Naive thymus-derived CD4-positive, alpha-beta T cell (primary cell): ENCODE measurements at regions of chr19 and their contacts with region 1.

Region 1: DNA sequence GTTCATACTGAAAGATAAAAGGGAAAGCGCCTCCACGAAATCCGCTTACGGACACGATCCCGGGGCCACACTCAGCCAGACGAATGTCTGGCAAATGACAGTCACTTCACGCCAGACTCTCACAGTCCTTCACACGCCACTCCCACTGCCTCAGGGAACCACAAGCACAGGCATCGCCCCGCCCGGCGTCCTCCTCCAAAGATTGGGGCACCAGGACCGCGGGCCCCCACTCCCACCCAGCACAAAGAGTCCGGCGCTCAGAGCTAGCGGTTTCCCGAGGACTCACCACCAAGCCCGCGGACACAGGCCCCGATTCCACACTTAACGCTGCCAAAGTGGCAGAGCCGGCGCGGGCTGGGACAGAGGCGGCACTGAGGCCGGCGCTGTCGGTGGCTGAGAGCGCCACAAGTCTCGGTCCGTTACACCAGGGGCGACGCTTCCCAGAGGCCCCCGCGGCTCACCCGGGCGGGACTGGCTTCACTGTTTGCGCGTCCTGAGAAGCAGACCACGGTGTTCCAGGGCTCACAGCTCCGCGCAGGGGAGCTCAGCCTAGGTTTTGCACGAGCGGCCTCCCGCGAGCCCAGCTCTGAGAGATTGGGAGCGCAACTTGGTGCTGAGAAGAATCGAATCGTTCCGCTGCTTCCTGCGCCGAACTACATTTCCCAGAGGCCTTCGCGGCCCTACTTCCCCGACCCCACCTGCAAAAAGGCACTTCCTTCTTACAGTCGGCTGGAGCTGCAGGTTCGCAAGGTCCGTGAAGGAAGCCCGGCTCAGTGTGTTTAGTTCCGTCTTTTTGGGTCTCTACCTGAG is at the start of gene ZNF569:
- DNase-seq: peak; percentile 68 to 95 (median 92)
- ATAC-seq: peak; percentile 79
- H3K4me3 ChIP-seq: peak within 1 kb of the TSS; percentile 79
- H3K4me3 Mint-ChIP-seq: peak within 1 kb of the TSS; percentile 91 to 100 (median 95)
- H3K27ac ChIP-seq: peak within 1 kb of the TSS; percentile 96
- H3K27ac Mint-ChIP-seq: peak within 1 kb of the TSS; percentile 93 to 100 (median 98)
- H3K4me1 ChIP-seq: peaks cover 13 to 16% of the 10 kb centered on the region in 2 donors
- H3K4me1 Mint-ChIP-seq: peaks cover 26 to 54% (median 45%) of the 10 kb centered on the region in 7 donors
- H3K27me3 ChIP-seq: no peaks in the 10 kb centered on the region
- H3K27me3 Mint-ChIP-seq: no peaks in the 10 kb centered on the region
- total RNA-seq, gene ZNF569: 4.1 to 16.4 (median 8.5) TPM

Region 2: DNA sequence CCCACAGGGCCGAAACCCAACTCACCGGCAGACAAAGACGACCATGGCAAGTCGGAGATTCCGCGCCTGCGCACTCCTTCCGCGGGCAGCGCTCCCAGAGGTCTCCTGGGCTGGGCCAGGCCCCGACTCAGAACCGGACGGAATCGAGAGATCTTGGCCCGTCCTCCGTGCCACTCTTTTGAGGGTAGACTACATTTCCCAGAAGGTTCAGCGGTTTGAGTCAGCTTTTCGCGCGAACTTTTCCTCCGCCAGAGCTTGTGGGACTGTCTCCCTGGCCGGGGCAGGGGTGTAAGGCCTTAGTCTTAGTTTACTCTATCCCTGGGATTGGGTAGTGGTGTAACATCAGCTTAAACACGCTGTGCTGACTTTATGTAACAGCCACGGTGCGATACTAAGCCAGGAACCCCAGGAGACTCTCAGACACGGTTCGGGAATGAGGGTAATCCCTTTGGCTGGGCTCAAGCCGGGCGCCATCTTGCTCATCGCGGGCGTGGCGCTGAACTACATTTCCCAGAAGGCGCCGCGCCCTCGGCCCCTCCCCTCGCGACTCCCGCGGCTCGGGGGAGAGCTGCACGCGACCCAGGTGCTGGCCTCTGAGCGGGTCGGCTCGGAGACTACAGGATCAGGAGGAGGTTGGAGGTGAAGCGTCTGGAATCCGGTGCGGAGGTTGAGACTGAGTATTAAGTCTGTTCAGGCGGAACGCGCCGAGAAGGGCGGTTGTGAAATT is 938.6 kb before region 1 on chr19 and contains the start of gene ZNF260:
- CTCF ChIA-PET with region 1: no interaction called
- POLR2A ChIA-PET with region 1: no interaction called
- intact Hi-C with region 1: loop called (anchors 1 kb)
- DNase-seq: peak; percentile 81 to 94 (median 90)
- ATAC-seq: peak; percentile 95
- H3K4me3 ChIP-seq: peak within 1 kb of the TSS; percentile 91
- H3K4me3 Mint-ChIP-seq: peak within 1 kb of the TSS; percentile 88 to 100 (median 98)
- H3K27ac ChIP-seq: peak within 1 kb of the TSS; percentile 83
- H3K27ac Mint-ChIP-seq: peak within 1 kb of the TSS; percentile 84 to 99 (median 96)
- H3K4me1 ChIP-seq: peaks cover 4 to 11% of the 10 kb centered on the region in 2 donors
- H3K4me1 Mint-ChIP-seq: peaks cover 15 to 31% (median 23%) of the 10 kb centered on the region in 7 donors
- H3K27me3 ChIP-seq: no peaks in the 10 kb centered on the region
- H3K27me3 Mint-ChIP-seq: no peaks in the 10 kb centered on the region
- total RNA-seq, gene ZNF260: 2.9 to 13.2 (median 11.3) TPM

Region 3: DNA sequence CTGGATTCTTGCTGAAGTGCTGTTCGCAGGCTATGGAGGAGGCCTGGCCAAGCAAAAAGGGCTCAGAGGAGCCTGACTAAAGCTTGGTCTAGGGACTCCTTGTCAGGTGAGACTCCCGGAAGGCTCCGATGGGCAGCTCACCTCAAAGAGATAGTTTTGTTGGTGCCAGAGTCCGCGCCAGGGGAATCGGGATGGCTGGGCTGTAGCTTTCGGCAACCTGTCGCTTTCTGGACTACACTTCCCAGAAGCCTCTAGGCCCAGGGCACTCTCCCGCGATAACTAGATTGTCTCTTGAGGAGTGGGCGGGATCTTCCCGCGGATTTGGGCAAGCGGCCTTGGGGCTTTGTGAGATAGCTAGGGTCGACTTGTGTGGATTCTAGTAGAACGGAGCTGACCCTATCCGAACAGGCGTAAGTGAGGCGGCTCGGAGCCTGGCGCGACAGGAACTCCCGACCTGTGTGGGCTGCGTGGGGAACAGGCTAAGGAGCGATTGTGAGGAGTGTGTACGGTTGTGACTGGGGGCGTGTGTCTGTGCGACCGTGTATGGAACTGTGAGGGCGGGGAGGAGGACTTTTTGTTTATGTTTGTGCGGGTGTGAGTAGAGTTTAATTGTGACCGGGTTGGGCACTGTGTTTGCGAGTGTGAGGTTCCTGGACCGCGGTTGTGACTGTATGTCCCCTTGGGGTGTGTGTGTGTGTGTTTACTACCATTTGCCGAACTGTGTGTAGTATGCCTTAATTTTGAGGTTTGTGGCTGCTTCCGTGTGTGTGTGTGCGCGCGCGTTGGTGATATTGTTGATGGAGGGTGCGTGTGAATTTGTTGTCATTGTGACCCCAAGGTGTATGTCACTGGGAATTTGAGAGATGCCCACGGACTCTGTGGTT is 616.2 kb before region 1 on chr19 and contains the start of gene ZNF345:
- CTCF ChIA-PET with region 1: no interaction called
- POLR2A ChIA-PET with region 1: no interaction called
- intact Hi-C with region 1: loop called (anchors 1 kb)
- DNase-seq: peak; percentile 62 to 91 (median 88)
- ATAC-seq: peak; percentile 93
- H3K4me3 ChIP-seq: peak within 1 kb of the TSS; percentile 92
- H3K4me3 Mint-ChIP-seq: no peak within 1 kb of the TSS
- H3K27ac ChIP-seq: peak within 1 kb of the TSS; percentile 86
- H3K27ac Mint-ChIP-seq: no peak within 1 kb of the TSS
- H3K4me1 ChIP-seq: peaks cover 9 to 16% of the 10 kb centered on the region in 2 donors
- H3K4me1 Mint-ChIP-seq: peaks cover 0 to 22% (median 13%) of the 10 kb centered on the region in 7 donors
- H3K27me3 ChIP-seq: no peaks in the 10 kb centered on the region
- H3K27me3 Mint-ChIP-seq: no peaks in the 10 kb centered on the region
- total RNA-seq, gene ZNF345: 6.8 to 18.2 (median 7.8) TPM

Region 4: GRCh38 chr19:37217855-37218591 is 249.0 kb before region 1 on chr19 and contains the start of gene ZNF383:
- CTCF ChIA-PET with region 1: no interaction called
- POLR2A ChIA-PET with region 1: interaction called, 4 read pairs
- intact Hi-C with region 1: loop called (anchors 1 to 2 kb)
- DNase-seq: peak; percentile 63 to 81 (median 78)
- ATAC-seq: peak; percentile 95
- H3K4me3 ChIP-seq: peak within 1 kb of the TSS; percentile 93
- H3K4me3 Mint-ChIP-seq: peak within 1 kb of the TSS; percentile 90 to 97 (median 92)
- H3K27ac ChIP-seq: peak within 1 kb of the TSS; percentile 94
- H3K27ac Mint-ChIP-seq: peak within 1 kb of the TSS; percentile 74 to 99 (median 91)
- H3K4me1 ChIP-seq: peaks cover 0 to 6% of the 10 kb centered on the region in 2 donors
- H3K4me1 Mint-ChIP-seq: peaks cover 21 to 33% (median 31%) of the 10 kb centered on the region in 7 donors
- H3K27me3 ChIP-seq: no peaks in the 10 kb centered on the region
- H3K27me3 Mint-ChIP-seq: no peaks in the 10 kb centered on the region
- total RNA-seq, gene ZNF383: 12.2 to 33.4 (median 21.2) TPM

Region 5: DNA sequence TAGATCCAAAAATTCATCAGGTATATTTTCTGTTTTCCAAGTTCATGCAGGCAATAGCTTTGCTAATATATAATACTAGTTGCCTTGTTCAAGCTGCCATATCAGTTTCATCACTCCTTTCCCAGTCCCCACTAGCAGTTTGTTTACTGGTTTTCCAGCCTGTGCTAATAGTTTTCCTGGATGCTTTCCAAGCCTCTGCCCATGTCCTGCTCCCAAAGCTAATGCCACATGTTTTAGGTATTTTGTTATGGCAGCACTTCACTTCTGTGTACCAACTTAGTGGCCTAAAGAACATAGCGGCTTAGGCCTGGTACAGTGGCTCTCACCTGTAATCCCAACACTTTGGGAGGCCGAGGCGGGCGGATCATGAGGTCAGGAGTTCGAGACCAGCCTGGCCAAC is 124.2 kb before region 1 on chr19:
- CTCF ChIA-PET with region 1: no interaction called
- POLR2A ChIA-PET with region 1: no interaction called
- intact Hi-C with region 1: no loop called
- DNase-seq: no peak
- ATAC-seq: no peak
- H3K4me3 ChIP-seq: no peak overlapping the region
- H3K4me3 Mint-ChIP-seq: no peak overlapping the region
- H3K27ac ChIP-seq: no peak overlapping the region
- H3K27ac Mint-ChIP-seq: no peak overlapping the region
- H3K4me1 ChIP-seq: no peaks in the 10 kb centered on the region
- H3K4me1 Mint-ChIP-seq: peaks cover 0 to 19% (median 7%) of the 10 kb centered on the region in 7 donors
- H3K27me3 ChIP-seq: no peaks in the 10 kb centered on the region
- H3K27me3 Mint-ChIP-seq: no peaks in the 10 kb centered on the region

Region 6: GRCh38 chr19:37594304-37594981 is 127.4 kb after region 1 on chr19 and contains the starts of genes ZNF540 and ZNF571:
- CTCF ChIA-PET with region 1: no interaction called
- POLR2A ChIA-PET with region 1: interaction called, 53 read pairs
- intact Hi-C with region 1: loop called (anchors 1 kb)
- DNase-seq: peak; percentile 70 to 95 (median 92)
- ATAC-seq: peak; percentile 96
- H3K4me3 ChIP-seq: peak within 1 kb of the TSS; percentile 80
- H3K4me3 Mint-ChIP-seq: peak within 1 kb of the TSS; percentile 94 to 100 (median 98)
- H3K27ac ChIP-seq: peak within 1 kb of the TSS; percentile 93
- H3K27ac Mint-ChIP-seq: peak within 1 kb of the TSS; percentile 93 to 100 (median 99)
- H3K4me1 ChIP-seq: peaks cover 7 to 18% of the 10 kb centered on the region in 2 donors
- H3K4me1 Mint-ChIP-seq: peaks cover 13 to 56% (median 39%) of the 10 kb centered on the region in 7 donors
- H3K27me3 ChIP-seq: no peaks in the 10 kb centered on the region
- H3K27me3 Mint-ChIP-seq: no peaks in the 10 kb centered on the region
- total RNA-seq, gene ZNF540: 0.99 to 22.7 (median 17.6) TPM
- total RNA-seq, gene ZNF571: 1.5 to 12.4 (median 9.0) TPM

Region 7: DNA sequence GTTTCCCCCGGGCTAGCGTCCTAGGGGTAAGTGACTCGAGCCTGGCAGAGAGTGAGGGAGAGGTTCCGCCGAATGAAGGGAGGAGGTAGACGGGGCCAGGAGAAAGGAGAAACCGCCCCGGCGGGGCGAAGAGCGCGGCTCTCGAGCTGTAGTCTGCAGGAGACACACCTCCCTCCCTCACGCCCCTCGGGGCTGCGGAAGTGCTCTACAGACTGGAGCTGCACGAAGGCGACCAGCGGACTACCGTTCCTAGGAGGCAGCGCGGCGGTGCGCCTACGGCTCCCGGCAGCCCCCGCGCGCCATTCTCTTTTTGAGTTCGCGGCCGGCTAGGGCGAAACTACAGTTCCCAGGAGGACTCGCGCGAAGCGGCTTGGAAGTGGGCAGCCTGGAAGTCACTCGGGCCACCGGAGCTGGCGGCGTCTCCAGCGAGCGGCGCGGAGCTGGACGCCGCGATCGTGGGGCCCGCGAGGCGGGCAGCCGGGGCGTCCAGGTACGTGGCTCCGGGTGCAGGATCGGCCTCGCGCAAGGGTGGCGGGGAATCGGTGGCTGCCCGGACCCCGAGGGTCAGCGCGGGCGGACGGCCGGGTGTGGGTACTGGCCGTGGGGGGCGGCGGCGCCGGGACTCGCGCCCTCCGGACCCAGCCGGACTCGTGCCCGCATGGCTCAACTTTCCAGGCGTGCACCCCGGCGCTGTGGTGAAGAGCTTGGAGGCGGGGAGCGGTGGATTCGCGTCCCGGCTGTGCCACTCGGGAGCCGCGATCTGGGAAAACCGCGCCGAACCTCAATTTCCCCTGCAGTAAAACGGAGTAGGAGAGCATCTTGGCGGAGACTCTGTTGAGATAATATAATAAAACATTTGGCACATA is 440.1 kb after region 1 on chr19 and contains the start of gene SIPA1L3:
- CTCF ChIA-PET with region 1: no interaction called
- POLR2A ChIA-PET with region 1: no interaction called
- intact Hi-C with region 1: loop called (anchors 1 to 2 kb)
- DNase-seq: peak; percentile 77 to 91 (median 89)
- ATAC-seq: peak; percentile 99
- H3K4me3 ChIP-seq: peak within 1 kb of the TSS; percentile 99
- H3K4me3 Mint-ChIP-seq: peak within 1 kb of the TSS; percentile 69 to 96 (median 90)
- H3K27ac ChIP-seq: peak within 1 kb of the TSS; percentile 89
- H3K27ac Mint-ChIP-seq: peak within 1 kb of the TSS; percentile 67 to 95 (median 90)
- H3K4me1 ChIP-seq: peaks cover 6 to 9% of the 10 kb centered on the region in 2 donors
- H3K4me1 Mint-ChIP-seq: peaks cover 24 to 39% (median 35%) of the 10 kb centered on the region in 7 donors
- H3K27me3 ChIP-seq: no peaks in the 10 kb centered on the region
- H3K27me3 Mint-ChIP-seq: peaks cover 0 to 2% (median 0%) of the 10 kb centered on the region in 5 donors
- total RNA-seq, gene SIPA1L3: 17.4 to 38.7 (median 34.8) TPM